PC-9 (cell line): ENCODE measurements at regions of chr3 and their contacts with region 1.

Region 1: DNA sequence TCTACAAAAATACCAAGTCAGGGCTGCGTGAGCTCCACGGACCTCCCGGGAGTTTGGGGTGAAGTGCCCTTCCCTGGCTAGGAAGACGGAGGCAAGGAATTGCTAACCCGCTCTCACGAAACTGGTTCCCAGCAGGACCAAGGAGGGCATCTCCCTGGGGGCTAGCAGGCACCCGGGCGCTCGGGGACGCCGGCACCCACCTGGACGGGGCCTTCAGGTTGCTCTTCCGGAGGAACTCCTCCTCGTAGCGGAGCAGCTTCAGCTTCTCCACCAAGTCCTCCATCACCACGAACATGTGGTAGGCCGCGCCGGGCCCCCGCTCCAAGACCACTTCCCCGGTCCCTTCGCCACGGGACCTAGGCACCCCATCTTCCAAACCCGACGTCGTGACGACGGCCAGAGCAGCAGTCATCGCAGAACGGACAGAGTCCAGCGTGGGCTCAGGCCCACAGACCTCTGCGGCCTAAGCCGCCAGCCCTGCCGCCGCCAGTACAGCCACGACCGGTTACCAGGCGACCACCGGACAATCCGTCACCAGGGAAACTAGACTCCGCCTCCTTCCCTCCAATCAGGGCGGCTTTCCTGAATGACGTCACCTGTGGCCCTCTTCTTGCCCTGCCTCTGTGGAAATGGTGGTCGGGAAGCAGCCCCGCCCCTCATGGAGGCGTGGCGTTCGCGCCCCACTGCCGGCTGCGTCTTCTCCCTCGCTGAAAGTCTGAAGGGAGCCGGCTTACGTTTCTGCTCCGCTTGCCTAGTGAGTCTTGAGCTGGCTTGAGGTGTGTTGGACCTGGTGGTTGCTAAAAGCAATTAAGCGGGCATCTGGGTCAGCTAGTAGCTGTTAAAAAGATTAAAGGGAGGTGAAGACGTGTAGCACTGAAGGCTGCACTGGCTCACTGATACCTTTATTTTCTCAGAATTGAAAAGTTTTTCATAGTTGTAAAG is at the start of gene IFT57:
- DNase-seq: peak; percentile 98 to 99
- H3K4me3 ChIP-seq: peak within 1 kb of the TSS; percentile 85
- H3K27ac ChIP-seq: peak within 1 kb of the TSS; percentile 28
- H3K4me1 ChIP-seq: peaks cover 27% of the 10 kb centered on the region
- H3K27me3 ChIP-seq: no peaks in the 10 kb centered on the region
- CTCF ChIP-seq: no peak
- total RNA-seq, gene IFT57: 55.2 and 65.7 TPM in 2 replicates

Region 2: GRCh38 chr3:107999215-107999775 is 222.9 kb before region 1 on chr3:
- CTCF ChIA-PET with region 1: interaction called, 4 read pairs
- POLR2A ChIA-PET with region 1: no interaction called
- intact Hi-C with region 1: loop called (anchors 5 kb)
- DNase-seq: peak; percentile 82 to 99
- H3K4me3 ChIP-seq: no peak overlapping the region
- H3K27ac ChIP-seq: peak overlapping the region; percentile 77
- H3K4me1 ChIP-seq: peaks cover 71% of the 10 kb centered on the region
- H3K27me3 ChIP-seq: no peaks in the 10 kb centered on the region
- CTCF ChIP-seq: 0 out of 2 replicates have a peak, but pooled peaks have one; percentile 32

Region 3: DNA sequence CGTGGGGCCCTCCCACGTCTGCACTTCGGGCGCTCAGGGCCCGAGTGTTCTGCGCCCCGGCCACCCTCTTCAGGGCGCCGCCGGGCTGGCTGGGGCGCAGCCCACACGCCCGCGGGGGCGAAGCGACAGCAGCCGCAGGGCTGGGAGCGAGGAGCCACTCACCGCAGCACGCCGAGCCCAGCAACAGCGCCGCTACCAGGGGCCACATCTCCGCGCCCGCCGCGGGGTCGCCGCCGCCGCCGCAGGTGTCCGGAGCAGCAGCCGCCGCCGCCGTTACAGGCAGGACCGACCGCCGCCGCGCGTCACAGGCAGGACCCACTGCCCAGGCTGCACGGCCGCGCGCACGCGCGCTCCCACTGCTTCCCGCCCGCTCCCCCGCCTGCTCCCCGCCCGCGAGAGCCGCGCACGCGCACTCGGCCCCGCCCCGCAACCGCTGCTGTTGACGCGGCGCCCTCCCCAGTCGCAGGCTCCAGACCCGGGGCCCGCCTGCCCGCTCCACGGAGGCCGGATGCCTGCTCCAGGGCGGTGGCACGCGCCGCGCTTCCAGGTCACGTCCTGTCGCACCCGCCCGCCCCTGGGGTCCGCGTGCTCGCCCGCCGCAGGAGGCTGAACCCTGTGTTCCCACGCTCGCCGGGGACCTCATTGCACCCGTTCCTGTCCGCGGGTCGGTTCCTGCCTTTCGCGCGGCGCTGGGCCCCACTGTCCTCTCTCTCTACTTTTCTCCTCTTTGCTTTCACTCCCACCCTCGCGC is 131.3 kb before region 1 on chr3 and contains the start of gene CD47:
- CTCF ChIA-PET with region 1: no interaction called
- POLR2A ChIA-PET with region 1: no interaction called
- intact Hi-C with region 1: loop called (anchors 1 kb)
- DNase-seq: peak; percentile 72 to 97
- H3K4me3 ChIP-seq: peak within 1 kb of the TSS; percentile 93
- H3K27ac ChIP-seq: 0 out of 2 replicates have a peak within 1 kb of the TSS, but pooled peaks have one; percentile 0
- H3K4me1 ChIP-seq: peaks cover 32% of the 10 kb centered on the region
- H3K27me3 ChIP-seq: no peaks in the 10 kb centered on the region
- CTCF ChIP-seq: no peak
- total RNA-seq, gene CD47: 74.8 and 76.9 TPM in 2 replicates

Region 4: DNA sequence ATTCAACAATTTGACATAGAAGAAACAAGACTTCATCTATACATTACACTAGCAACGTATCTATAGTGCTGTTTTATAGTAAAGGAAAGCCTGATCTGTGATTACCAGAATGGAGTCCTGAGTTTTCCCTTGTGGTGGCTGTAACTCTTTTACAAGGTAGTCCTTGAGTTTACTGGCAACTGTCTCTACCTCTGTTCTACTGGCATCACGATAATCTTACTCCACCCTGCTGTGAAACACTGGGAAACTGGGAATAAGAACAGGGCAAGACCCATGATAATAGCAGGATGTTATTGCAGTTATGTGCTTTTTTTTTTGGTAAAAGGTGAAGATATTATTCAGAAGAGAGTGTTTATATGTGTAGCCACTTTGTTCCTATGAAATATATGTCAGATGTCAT is 61.8 kb after region 1 on chr3:
- CTCF ChIA-PET with region 1: no interaction called
- POLR2A ChIA-PET with region 1: interaction called, 10 read pairs
- intact Hi-C with region 1: no loop called
- DNase-seq: no peak
- H3K4me3 ChIP-seq: no peak overlapping the region
- H3K27ac ChIP-seq: no peak overlapping the region
- H3K4me1 ChIP-seq: peaks cover 16% of the 10 kb centered on the region
- H3K27me3 ChIP-seq: no peaks in the 10 kb centered on the region
- CTCF ChIP-seq: no peak

Region 5: DNA sequence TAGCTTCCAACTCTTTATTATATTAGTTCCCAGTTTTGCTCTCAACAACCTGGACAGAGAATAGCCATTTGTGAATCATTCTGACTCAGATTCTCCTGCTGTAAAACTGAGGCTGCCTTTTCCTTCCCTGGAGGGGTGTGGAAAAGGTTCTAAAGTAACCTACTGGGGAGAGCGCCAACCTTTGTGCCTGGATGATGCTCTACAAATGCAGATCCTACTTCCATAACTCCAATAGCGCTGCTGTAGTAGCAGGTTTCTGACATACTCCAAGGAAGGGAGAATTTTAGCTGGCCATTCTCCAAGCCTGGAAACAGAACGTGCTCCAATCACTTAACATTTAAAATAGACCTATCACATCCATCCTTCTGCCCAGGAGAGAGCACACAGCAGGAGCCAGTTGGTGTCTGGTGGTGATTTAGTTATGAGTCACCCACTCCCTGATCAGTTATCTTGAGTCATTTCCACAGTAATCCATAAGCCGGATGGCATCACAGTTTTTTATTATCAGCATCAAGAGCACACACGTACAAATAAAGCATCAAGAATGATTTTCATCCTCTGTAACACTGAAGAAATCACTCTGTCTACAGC is 249.9 kb after region 1 on chr3:
- CTCF ChIA-PET with region 1: no interaction called
- POLR2A ChIA-PET with region 1: no interaction called
- intact Hi-C with region 1: loop called (anchors 5 kb)
- DNase-seq: peak; percentile 49 to 94
- H3K4me3 ChIP-seq: peak overlapping the region; percentile 3; the same call in 1 of the 2 replicates
- H3K27ac ChIP-seq: peak overlapping the region; percentile 85
- H3K4me1 ChIP-seq: peaks cover 63% of the 10 kb centered on the region
- H3K27me3 ChIP-seq: no peaks in the 10 kb centered on the region
- CTCF ChIP-seq: no peak